ENCODE measurements at regions of chr1 and their contacts with region 1.

Region 1: DNA sequence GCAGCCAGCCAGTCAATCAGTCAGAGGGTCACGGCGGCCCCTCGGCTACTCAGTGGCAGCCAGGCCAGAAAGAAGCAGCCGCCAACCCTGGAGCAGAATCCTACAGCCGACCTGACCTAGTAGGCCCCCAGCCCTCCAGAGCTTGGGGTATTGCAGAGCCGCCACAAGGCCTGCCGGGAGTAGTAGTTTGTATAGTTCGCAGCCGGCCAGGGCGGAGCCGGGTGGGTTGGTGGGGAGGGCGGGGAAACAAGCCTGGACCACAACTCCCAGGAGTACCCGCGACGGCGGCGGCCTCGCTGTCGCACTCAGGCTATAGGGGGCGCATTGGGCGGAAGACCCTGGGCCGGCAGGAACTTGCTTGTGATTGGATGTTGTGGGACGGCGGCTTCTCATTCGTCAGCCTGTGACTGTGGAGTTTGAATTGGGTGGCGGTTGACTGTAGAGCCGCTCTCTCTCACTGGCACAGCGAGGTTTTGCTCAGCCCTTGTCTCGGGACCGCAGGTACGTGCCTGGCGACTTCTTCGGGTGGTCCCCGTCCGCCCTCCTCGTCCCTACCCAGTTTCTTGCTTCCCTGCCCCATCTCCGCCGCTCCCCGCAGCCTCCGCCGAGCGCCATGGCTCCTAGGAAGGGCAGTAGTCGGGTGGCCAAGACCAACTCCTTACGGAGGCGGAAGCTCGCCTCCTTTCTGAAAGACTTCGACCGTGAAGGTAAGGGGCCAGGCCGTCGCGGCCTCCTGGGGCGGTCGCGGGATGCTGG is at the start of gene CDCA8:
- DNase-seq: peak; percentile 95 to 98 (median 97)
- H3K4me3 ChIP-seq: peak within 1 kb of the TSS; percentile 66
- H3K27ac ChIP-seq: peak within 1 kb of the TSS; percentile 26 to 60
- H3K4me1 ChIP-seq: peaks cover 15% of the 10 kb centered on the region
- H3K27me3 ChIP-seq: no peaks in the 10 kb centered on the region
- CTCF ChIP-seq: peak; percentile 41 to 73 (median 54)
- EP300 ChIP-seq: no peak
- POLR2A ChIP-seq: no peak
- total RNA-seq, gene CDCA8: 0.11 to 1.3 (median 0.42) TPM

Region 2: DNA sequence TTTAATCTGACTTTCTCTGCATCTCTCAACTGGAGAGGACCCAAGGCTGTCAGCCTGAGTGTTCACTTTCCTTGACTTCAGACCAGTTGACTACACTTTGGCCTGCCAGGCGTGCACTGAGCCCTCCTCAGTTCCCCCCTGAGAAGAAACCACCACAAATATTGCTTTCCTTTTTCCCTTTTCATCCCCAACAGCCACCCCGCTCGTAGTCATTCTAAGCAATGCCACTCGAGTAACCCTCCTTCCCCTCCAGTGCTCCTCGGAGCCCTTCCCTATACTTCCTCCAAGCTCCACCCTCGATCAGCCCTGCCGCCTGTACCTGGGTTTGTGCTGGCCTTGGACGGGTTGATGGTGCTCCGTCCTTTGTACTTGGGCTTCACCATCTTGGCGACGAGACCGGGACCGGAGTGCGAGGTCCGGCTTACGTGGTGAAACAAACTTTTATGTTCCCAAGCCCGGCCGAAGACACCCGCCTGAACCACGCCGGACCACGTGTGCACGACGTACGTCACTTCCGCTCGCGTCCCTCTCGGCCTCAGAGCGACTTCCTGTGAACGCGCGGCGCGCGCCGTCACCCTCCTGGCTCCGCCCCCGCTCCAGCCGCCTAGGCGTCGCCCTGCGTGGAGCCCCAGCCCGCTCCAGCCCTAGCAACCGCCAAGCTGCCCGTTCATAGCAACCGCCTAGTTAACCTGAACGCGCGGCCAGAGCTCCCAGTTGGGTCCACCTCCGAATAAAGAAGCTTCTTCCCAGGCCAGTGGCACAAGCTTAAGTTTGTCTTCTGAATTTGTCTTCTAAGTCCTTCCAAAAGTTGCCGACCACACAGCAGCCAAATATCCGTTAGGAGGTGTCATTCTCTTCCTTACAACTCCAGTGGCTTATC is 96.6 kb before region 1 on chr1 and contains the start of gene GNL2:
- intact Hi-C with region 1: loop called in 2 of 4 experiments (anchors 2 to 10 kb)
- DNase-seq: peak; percentile 95 to 99 (median 98)
- H3K4me3 ChIP-seq: peak within 1 kb of the TSS; percentile 77
- H3K27ac ChIP-seq: peak within 1 kb of the TSS in 1 of 2 donors; percentile 40
- H3K4me1 ChIP-seq: peaks cover 7% of the 10 kb centered on the region
- H3K27me3 ChIP-seq: no peaks in the 10 kb centered on the region
- CTCF ChIP-seq: no peak
- EP300 ChIP-seq: no peak
- POLR2A ChIP-seq: peak; percentile 75
- total RNA-seq, gene GNL2: 26.6 to 43.0 (median 31.7) TPM

Region 3: GRCh38 chr1:37859507-37860345 is 167.5 kb after region 1 on chr1 and contains the start of gene MTF1:
- intact Hi-C with region 1: loop called in 2 of 4 experiments (anchors 5 kb)
- DNase-seq: peak; percentile 96 to 97 (median 97)
- H3K4me3 ChIP-seq: peak within 1 kb of the TSS; percentile 91
- H3K27ac ChIP-seq: peak within 1 kb of the TSS; percentile 71 to 84
- H3K4me1 ChIP-seq: peaks cover 4% of the 10 kb centered on the region
- H3K27me3 ChIP-seq: no peaks in the 10 kb centered on the region
- CTCF ChIP-seq: peak; percentile 81 to 90 (median 89)
- EP300 ChIP-seq: peak; percentile 1
- POLR2A ChIP-seq: peak; percentile 84
- total RNA-seq, gene MTF1: 3.4 to 29.1 (median 21.9) TPM

Measured in ovary (tissue), 10 donors.